A673 (cell line): ENCODE measurements at regions of chr6 and their contacts with region 1.

Region 1: GRCh38 chr6:142207265-142207877 is 60.3 kb downstream of the VTA1 start:
- DNase-seq: peak; percentile 79
- H3K4me3 ChIP-seq: no peak overlapping the region
- H3K27ac ChIP-seq: no peak overlapping the region
- H3K4me1 ChIP-seq: no peaks in the 10 kb centered on the region
- H3K27me3 ChIP-seq: no peaks in the 10 kb centered on the region
- CTCF ChIP-seq: peak; percentile 89

Region 2: DNA sequence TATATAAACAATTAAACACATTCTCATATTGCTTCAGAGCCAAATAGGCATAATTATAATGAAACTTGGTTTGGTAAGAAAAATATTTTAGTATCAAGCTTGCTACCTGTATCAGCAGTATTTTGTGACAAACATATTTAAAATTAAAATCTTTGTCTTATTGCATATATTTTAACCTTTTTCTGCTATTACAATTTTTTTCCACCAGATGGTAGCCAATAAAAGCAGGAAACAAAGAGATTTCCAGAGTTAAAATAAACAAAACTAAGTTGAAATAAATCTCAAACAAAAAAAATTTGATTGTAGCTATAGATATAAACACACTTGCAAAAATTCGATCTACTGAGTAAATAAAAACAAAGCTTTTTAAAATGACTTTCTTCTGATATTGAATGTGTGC is 566.0 kb before region 1 on chr6:
- CTCF ChIA-PET with region 1: no interaction called
- POLR2A ChIA-PET with region 1: no interaction called
- intact Hi-C with region 1: loop called (anchors 10 kb)
- DNase-seq: no peak
- H3K4me3 ChIP-seq: no peak overlapping the region
- H3K27ac ChIP-seq: peak overlapping the region; percentile 80
- H3K4me1 ChIP-seq: peaks cover 53% of the 10 kb centered on the region
- H3K27me3 ChIP-seq: no peaks in the 10 kb centered on the region
- CTCF ChIP-seq: peak; percentile 51; the same call in 1 of the 2 replicates

Region 3: GRCh38 chr6:142146828-142147662 is 60.3 kb before region 1 on chr6 and contains the starts of genes NMBR and VTA1:
- CTCF ChIA-PET with region 1: no interaction called
- POLR2A ChIA-PET with region 1: no interaction called
- intact Hi-C with region 1: loop called (anchors 1 kb)
- DNase-seq: peak; percentile 99
- H3K4me3 ChIP-seq: peak within 1 kb of the TSS; percentile 71
- H3K27ac ChIP-seq: peak within 1 kb of the TSS; percentile 60
- H3K4me1 ChIP-seq: peaks cover 5% of the 10 kb centered on the region
- H3K27me3 ChIP-seq: no peaks in the 10 kb centered on the region
- CTCF ChIP-seq: peak; percentile 96
- total RNA-seq, gene NMBR: not detected in 2 replicates
- total RNA-seq, gene VTA1: 72.9 and 75.4 TPM in 2 replicates

Region 4: DNA sequence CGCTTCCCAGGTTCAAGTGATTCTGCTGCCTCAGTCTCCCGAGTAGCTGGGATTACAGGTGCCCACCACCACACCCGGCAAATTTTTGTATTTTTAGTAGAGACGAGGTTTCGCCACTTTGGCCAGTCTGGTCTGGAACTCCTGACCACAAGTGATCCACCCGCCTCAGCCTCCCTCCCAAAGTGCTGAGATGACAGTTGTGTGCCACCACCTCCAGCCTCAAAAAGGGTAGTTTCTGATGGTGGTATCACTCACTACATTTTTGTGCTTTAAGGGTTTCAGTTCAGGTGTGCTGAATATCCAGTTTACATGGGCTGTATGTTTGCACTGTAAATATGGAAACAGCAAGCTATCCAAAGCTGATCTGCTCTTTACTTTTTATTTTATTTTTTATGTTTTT is 82.3 kb after region 1 on chr6:
- CTCF ChIA-PET with region 1: interaction called, 12 read pairs
- POLR2A ChIA-PET with region 1: no interaction called
- intact Hi-C with region 1: no loop called
- DNase-seq: no peak
- H3K4me3 ChIP-seq: no peak overlapping the region
- H3K27ac ChIP-seq: no peak overlapping the region
- H3K4me1 ChIP-seq: no peaks in the 10 kb centered on the region
- H3K27me3 ChIP-seq: no peaks in the 10 kb centered on the region
- CTCF ChIP-seq: no peak